KBM-7 (cell line): ENCODE measurements at regions of chr10 and their contacts with region 1.

Region 1: GRCh38 chr10:16586358-16587138 is 64.9 kb upstream of the C1QL3 start:
- DNase-seq: no peak

Region 2: GRCh38 chr10:15901889-15902288 is 684.7 kb before region 1 on chr10:
- in situ Hi-C with region 1: loop called (anchors 25 kb)
- DNase-seq: no peak

Region 3: GRCh38 chr10:17453373-17454091 is 867.0 kb after region 1 on chr10:
- in situ Hi-C with region 1: no loop called
- DNase-seq: peak; percentile 66